Gastrocnemius medialis (tissue), 4 donors: ENCODE measurements at regions of chr9 and their contacts with region 1.

Region 1: GRCh38 chr9:12884737-12885414 is 110.1 kb downstream of the LURAP1L start:
- DNase-seq: no peak
- ATAC-seq: no peak
- H3K4me3 ChIP-seq: no peak overlapping the region
- H3K27ac ChIP-seq: no peak overlapping the region
- H3K4me1 ChIP-seq: peaks cover 0 to 5% of the 10 kb centered on the region in 2 donors
- H3K27me3 ChIP-seq: no peaks in the 10 kb centered on the region
- CTCF ChIP-seq: peak in 4 of 5 experiments; percentile 23 to 46 (median 34)
- POLR2A ChIP-seq: no peak

Region 2: DNA sequence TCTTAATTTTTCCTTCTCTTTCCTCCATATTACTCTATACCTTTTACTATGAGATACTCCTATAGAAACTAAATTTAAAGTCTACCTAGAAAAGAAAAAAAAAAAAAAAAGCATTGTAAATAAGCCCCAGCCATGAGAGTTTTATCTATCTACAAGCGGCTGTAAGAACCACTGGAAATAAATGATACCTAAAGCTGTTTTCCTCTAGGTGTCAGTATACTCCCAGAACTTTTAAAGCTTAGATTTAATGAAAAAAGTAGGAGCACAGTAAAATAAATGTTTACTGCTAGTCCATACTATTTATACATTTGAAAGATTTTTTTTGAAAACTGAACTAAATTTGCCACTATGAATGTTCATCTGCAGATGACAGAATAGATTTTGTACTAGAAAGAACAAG is 165.4 kb before region 1 on chr9:
- in situ Hi-C with region 1: loop called in 2 of 4 experiments (anchors 5 to 10 kb)
- intact Hi-C with region 1: loop called (anchors 5 kb)
- DNase-seq: no peak
- ATAC-seq: no peak
- H3K4me3 ChIP-seq: no peak overlapping the region
- H3K27ac ChIP-seq: no peak overlapping the region
- H3K4me1 ChIP-seq: no peaks in the 10 kb centered on the region
- H3K27me3 ChIP-seq: no peaks in the 10 kb centered on the region
- CTCF ChIP-seq: peak in 3 of 5 experiments; percentile 10 to 49 (median 41)
- POLR2A ChIP-seq: no peak

Region 3: DNA sequence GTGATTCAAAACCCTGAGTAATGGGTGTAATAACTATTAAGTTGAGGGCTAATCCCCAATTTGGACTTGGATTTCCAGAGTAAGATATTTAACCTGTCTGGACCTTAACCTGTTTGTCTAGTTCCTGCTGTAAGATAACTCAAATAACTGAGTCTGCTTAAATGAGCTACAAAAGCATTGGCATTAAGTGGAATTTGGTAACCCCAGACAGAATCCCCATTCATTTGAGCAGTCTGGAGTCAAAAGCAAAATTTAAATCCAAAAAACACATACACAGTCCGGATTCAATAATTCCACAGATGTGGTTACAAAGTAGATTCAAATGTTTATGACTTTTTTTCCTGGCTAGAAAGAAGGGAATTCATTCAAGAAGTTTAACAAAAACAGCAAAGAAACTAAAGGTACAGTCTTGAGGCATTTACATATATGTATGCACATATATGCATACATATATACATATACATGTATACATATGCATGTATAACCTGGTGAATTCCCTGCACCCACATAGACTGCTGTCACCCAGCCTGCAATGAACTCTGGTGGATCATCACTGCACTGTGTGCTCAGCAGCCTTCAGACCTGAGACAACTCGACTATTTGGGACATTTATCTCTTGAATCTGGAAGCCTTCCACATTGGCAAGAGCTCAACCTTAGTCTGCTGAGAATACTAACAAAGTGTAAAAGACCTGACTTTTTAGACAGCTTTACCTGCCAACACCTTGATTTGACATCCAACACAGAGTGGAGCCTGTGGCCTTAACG is 95.4 kb after region 1 on chr9:
- in situ Hi-C with region 1: no loop called
- intact Hi-C with region 1: no loop called
- DNase-seq: no peak
- ATAC-seq: no peak
- H3K4me3 ChIP-seq: no peak overlapping the region
- H3K27ac ChIP-seq: no peak overlapping the region
- H3K4me1 ChIP-seq: no peaks in the 10 kb centered on the region
- H3K27me3 ChIP-seq: no peaks in the 10 kb centered on the region
- CTCF ChIP-seq: no peak
- POLR2A ChIP-seq: no peak